Activated CD4-positive, alpha-beta memory T cell treated with anti-CD3 and anti-CD28 coated beads for 36 hours (primary cell): ENCODE measurements at regions of chr2 and their contacts with region 1.

Region 1: DNA sequence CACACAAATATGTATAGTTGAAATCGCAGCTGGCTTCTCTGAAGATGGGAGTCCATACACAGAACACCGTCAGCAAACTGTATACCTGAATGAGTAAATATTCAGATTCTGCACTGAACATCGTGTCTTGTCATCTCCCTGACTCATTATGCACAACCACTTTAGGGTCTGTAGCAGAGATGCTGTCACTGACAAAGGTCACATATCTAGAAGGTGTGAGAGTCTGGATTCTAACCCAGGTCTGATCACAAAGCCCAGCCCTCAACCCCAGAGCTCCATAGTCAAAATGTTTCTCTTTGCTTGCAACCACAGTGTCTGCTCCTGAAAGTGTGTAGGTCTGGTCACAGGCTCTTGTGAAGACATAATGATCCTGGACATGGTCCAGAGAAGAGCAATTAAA is 78.3 kb upstream of the PAX8 start:
- DNase-seq: peak; percentile 24
- H3K4me3 Mint-ChIP-seq: no peak overlapping the region
- H3K27ac Mint-ChIP-seq: no peak overlapping the region
- H3K4me1 Mint-ChIP-seq: peaks cover 21% of the 10 kb centered on the region
- H3K27me3 Mint-ChIP-seq: peaks cover 6% of the 10 kb centered on the region

Region 2: GRCh38 chr2:113124181-113124961 is 232.7 kb before region 1 on chr2:
- CTCF ChIA-PET with region 1: no interaction called
- POLR2A ChIA-PET with region 1: no interaction called
- intact Hi-C with region 1: no loop called
- DNase-seq: peak; percentile 29
- H3K4me3 Mint-ChIP-seq: no peak overlapping the region
- H3K27ac Mint-ChIP-seq: peak overlapping the region; percentile 3
- H3K4me1 Mint-ChIP-seq: peaks cover 34% of the 10 kb centered on the region
- H3K27me3 Mint-ChIP-seq: peaks cover 12% of the 10 kb centered on the region

Region 3: DNA sequence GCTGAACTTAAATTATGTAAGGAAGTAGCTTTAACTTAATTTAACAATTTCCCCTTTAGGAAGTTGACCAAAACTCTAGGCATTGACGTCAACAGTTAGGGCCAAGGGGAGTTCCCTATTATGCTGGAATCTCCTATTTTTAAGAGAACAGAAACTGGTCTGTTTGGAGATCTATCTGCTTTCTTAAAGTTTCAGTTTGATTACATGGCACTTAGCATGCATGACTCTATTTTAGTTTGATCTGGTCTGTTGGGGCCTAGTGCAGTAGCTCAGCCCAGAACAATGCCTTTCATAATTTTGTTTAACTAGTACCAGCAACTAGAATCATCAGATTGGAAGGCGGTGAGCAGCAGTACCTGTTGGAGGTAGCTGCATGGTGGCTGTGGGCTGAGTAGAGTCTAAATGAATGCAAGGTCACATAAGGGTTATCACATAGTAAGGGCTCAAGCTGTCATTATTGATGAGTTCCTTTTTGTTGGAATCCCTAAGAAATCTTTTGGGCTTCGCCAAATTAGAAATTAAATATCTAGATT is 19.9 kb after region 1 on chr2:
- CTCF ChIA-PET with region 1: no interaction called
- POLR2A ChIA-PET with region 1: no interaction called
- intact Hi-C with region 1: loop called (anchors 2 kb)
- DNase-seq: no peak
- H3K4me3 Mint-ChIP-seq: no peak overlapping the region
- H3K27ac Mint-ChIP-seq: peak overlapping the region; percentile 35
- H3K4me1 Mint-ChIP-seq: peaks cover 17% of the 10 kb centered on the region
- H3K27me3 Mint-ChIP-seq: peaks cover 11% of the 10 kb centered on the region

Region 4: GRCh38 chr2:113876503-113877387 is 519.7 kb after region 1 on chr2:
- CTCF ChIA-PET with region 1: no interaction called
- POLR2A ChIA-PET with region 1: no interaction called
- intact Hi-C with region 1: no loop called
- DNase-seq: peak; percentile 93
- H3K4me3 Mint-ChIP-seq: peak overlapping the region; percentile 30
- H3K27ac Mint-ChIP-seq: peak overlapping the region; percentile 84
- H3K4me1 Mint-ChIP-seq: peaks cover 38% of the 10 kb centered on the region
- H3K27me3 Mint-ChIP-seq: no peaks in the 10 kb centered on the region